Panc1 (cell line): ENCODE measurements at regions of chr11 and their contacts with region 1.

Region 1: DNA sequence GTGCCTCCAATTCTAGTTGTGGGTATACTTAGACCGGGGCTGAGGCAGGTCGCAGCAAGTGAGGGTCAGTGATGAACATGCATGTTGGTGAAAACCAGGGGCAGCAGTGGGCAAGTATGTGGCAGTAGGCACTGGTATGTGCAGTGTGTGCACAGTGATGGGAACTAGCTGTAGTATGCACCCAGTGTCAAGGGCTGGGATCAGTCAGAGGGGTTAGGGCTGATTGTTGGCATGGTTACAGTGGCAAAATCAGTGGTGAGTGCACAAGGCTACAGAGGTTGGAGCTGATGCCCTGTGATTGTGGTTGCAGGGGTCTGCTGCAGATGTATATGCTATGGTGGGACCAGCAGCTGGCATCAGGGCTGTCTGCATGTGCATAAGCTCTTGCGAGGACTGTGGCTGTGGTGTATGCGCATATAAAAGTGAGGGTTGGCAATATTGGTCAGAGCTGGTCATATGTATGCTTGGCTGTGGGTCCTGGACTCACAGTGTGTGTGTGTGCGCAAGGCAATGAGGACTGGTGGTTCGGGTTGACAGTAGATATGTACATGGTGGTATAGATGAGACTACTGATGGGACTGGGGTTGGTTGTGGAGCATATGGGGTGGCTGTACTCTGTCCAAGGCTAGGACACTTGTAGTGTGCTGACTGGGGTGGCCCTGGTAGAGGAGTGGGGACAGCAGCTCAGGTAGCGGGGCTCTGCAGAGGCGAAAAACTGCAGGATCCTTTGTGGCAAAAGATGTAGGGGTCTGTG is 33.7 kb upstream of the CHORDC1 start:
- DNase-seq: no peak
- ATAC-seq: no peak
- H3K4me3 ChIP-seq: no peak overlapping the region
- H3K27ac ChIP-seq: no peak overlapping the region
- H3K4me1 ChIP-seq: no peaks in the 10 kb centered on the region
- H3K27me3 ChIP-seq: no peaks in the 10 kb centered on the region; the same call in 1 of the 2 replicates
- CTCF ChIP-seq: no peak

Region 2: DNA sequence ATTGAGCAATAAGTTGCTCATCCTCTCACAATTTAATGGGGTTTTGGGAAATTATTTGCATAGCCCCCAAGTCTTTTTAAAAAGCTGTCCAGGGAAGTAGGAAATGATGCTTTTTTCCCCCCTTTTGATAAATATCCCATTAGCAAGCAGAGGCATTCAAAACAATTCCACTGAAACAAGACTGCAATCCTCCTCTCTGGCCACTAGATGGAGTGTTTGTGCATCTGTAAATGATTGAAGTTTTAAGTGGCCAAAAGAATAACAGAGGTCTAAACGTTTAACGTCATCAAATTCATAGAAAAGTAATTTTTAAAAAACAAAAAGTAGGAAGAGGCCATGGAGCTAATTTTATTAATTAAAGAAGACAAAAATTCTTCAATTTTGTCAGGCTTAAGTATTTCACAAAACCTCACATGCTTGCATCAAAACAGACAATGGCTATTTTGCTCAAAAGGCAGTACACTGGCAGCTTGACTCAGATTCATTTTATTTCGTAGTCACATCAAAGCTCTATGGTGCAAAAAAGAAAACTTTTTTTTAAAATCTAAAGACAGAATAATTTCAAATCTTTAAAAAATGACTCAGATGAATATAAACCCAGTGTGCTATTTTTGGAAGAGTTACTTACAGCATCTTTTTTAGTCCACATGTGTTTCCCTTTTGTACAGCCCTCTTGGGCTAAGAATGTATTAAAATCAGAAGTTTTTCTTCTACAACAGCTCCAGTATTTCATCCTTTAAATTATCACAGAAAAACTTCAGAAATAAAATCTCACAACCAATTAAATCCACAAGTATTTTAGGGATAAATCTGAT is 51.5 kb before region 1 on chr11:
- CTCF ChIA-PET with region 1: no interaction called
- POLR2A ChIA-PET with region 1: no interaction called
- in situ Hi-C with region 1: no loop called
- intact Hi-C with region 1: loop called (anchors 10 kb)
- DNase-seq: peak; percentile 48
- ATAC-seq: 0 out of 2 replicates have a peak, but pooled peaks have one; percentile 62
- H3K4me3 ChIP-seq: no peak overlapping the region
- H3K27ac ChIP-seq: no peak overlapping the region
- H3K4me1 ChIP-seq: no peaks in the 10 kb centered on the region
- H3K27me3 ChIP-seq: no peaks in the 10 kb centered on the region
- CTCF ChIP-seq: peak; percentile 91